ENCODE measurements at regions of chr1 and their contacts with region 1.

Region 1: GRCh38 chr1:117758444-117759316 is 152.8 kb downstream of the TENT5C start:
- DNase-seq: peak; percentile 45
- ATAC-seq: peak; percentile 92
- H3K4me3 Mint-ChIP-seq: peak overlapping the region; percentile 73
- H3K27ac Mint-ChIP-seq: no peak overlapping the region
- H3K4me1 Mint-ChIP-seq: peaks cover 12% of the 10 kb centered on the region
- H3K27me3 Mint-ChIP-seq: peaks cover 15% of the 10 kb centered on the region
- CTCF ChIP-seq: peak; percentile 45

Region 2: GRCh38 chr1:117067533-117068370 is 690.9 kb before region 1 on chr1:
- CTCF ChIA-PET with region 1: interaction called, 3 read pairs
- POLR2A ChIA-PET with region 1: no interaction called
- intact Hi-C with region 1: loop called (anchors 1 kb)
- DNase-seq: no peak
- ATAC-seq: peak; percentile 85
- H3K4me3 Mint-ChIP-seq: no peak overlapping the region
- H3K27ac Mint-ChIP-seq: no peak overlapping the region
- H3K4me1 Mint-ChIP-seq: peaks cover 3% of the 10 kb centered on the region
- H3K27me3 Mint-ChIP-seq: no peaks in the 10 kb centered on the region
- CTCF ChIP-seq: no peak

Region 3: GRCh38 chr1:117312225-117313138 is 446.2 kb before region 1 on chr1:
- CTCF ChIA-PET with region 1: interaction called, 6 read pairs
- POLR2A ChIA-PET with region 1: no interaction called
- intact Hi-C with region 1: loop called (anchors 5 kb)
- DNase-seq: no peak
- ATAC-seq: no peak
- H3K4me3 Mint-ChIP-seq: no peak overlapping the region
- H3K27ac Mint-ChIP-seq: no peak overlapping the region
- H3K4me1 Mint-ChIP-seq: no peaks in the 10 kb centered on the region
- H3K27me3 Mint-ChIP-seq: peaks cover 7% of the 10 kb centered on the region
- CTCF ChIP-seq: no peak

Region 4: DNA sequence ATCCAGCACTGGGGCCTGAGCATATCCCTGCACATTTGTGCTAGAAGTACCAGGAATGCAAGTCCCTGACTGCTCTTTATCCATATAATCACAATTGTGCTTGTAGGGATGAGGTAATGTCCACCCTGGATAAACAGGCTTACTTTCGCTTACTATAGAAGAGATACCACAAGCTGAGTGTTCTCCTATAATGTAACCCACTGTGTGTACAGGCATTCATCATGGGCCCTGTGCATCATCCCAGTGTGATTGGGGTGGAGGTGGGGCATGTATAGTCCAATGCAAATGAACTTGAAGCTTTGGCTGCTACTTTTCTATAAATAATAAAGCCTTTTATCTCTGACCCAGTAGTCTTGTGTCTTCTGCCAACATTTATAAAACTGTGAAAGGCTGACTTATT is 322.2 kb before region 1 on chr1:
- CTCF ChIA-PET with region 1: no interaction called
- POLR2A ChIA-PET with region 1: no interaction called
- intact Hi-C with region 1: no loop called
- DNase-seq: no peak
- ATAC-seq: no peak
- H3K4me3 Mint-ChIP-seq: no peak overlapping the region
- H3K27ac Mint-ChIP-seq: no peak overlapping the region
- H3K4me1 Mint-ChIP-seq: peaks cover 5% of the 10 kb centered on the region
- H3K27me3 Mint-ChIP-seq: no peaks in the 10 kb centered on the region
- CTCF ChIP-seq: no peak

Region 5: GRCh38 chr1:117529683-117530082 is 229.0 kb before region 1 on chr1:
- CTCF ChIA-PET with region 1: interaction called, 239 read pairs
- POLR2A ChIA-PET with region 1: interaction called, 8 read pairs
- intact Hi-C with region 1: no loop called
- DNase-seq: no peak
- ATAC-seq: no peak
- H3K4me3 Mint-ChIP-seq: no peak overlapping the region
- H3K27ac Mint-ChIP-seq: no peak overlapping the region
- H3K4me1 Mint-ChIP-seq: no peaks in the 10 kb centered on the region
- H3K27me3 Mint-ChIP-seq: no peaks in the 10 kb centered on the region
- CTCF ChIP-seq: no peak

Region 6: DNA sequence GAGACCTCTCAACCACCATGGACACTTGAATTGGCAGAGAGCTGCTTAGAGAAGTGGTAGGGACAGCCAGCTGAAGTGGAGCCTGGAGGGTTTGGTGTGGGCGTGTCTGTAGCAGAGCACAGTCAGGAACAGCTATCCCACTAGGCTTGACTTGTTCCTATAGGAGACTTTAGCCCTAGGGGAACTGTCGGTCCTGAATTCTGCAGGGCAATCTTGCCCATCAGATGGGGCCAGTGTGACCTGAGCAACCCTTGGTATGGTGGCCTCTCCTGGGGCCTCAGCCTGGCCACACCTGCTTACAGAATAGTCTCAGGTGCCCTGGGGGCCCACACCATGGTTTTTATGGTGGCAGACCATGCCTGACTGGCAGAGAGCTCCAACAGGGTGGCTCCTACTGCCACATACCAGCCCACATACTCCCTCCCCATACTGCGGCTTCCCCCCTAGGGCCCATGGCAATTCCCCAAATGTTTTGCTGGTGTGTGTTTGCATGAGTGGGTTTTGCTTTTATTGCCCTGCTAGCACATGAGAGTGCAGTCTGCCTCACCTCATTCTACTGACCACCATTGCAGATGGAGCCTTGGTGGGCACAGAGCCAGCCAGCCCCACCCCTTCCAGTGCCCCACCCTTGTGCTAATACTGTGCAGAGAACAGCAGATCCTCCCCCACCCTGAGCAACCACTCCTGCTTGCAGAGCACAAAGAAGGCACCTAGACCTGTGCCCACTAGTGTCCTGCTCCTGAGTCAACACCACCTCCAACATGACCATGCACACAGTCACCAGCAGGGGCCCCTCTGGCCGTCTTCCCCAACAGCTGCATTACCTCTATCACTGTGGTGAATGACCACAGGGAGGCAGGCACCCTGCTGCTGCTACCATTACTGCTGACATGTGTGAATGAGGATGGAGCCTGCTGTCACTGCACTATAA is 83.8 kb after region 1 on chr1:
- CTCF ChIA-PET with region 1: no interaction called
- POLR2A ChIA-PET with region 1: no interaction called
- intact Hi-C with region 1: no loop called
- DNase-seq: no peak
- ATAC-seq: no peak
- H3K4me3 Mint-ChIP-seq: no peak overlapping the region
- H3K27ac Mint-ChIP-seq: no peak overlapping the region
- H3K4me1 Mint-ChIP-seq: no peaks in the 10 kb centered on the region
- H3K27me3 Mint-ChIP-seq: no peaks in the 10 kb centered on the region
- CTCF ChIP-seq: no peak

Region 7: DNA sequence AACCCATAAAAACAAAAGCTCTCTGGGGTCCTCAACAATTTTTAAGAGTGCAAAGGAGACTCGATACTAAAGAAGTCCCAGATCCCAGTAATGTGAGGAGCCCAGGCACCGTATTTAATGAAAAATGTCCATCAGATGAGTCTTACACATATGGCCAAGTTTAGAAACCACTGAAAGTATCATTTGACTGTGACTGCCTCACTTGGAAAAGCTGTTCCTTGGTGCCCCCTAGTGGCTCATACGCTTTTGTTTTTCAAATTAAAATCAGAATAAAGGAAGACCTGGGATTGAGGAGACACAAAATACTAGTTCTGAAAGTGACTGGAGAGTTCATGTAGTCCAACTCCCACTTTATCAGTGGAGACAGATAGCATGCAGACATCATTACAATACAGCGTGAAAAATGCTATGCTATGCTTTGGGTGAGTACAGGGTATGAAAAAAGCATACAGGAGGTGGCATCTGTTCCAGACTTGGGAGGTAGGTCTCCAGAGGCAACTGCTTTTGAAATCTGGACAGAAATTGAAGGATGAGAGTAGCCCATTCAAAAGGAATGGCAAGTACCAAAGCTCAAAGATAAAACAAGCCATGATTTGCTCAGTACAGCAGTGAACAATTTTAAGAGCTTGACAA is 136.9 kb after region 1 on chr1:
- CTCF ChIA-PET with region 1: interaction called, 5 read pairs
- POLR2A ChIA-PET with region 1: no interaction called
- intact Hi-C with region 1: loop called (anchors 1 kb)
- DNase-seq: no peak
- ATAC-seq: peak; percentile 68
- H3K4me3 Mint-ChIP-seq: no peak overlapping the region
- H3K27ac Mint-ChIP-seq: no peak overlapping the region
- H3K4me1 Mint-ChIP-seq: no peaks in the 10 kb centered on the region
- H3K27me3 Mint-ChIP-seq: no peaks in the 10 kb centered on the region
- CTCF ChIP-seq: peak; percentile 34

Measured in activated B cell treated with CpG ODN at 0.5 μM for 24 hours (primary cell).